Prostate gland (tissue), 2 donors: ENCODE measurements at regions of chr10 and their contacts with region 1.

Region 1: DNA sequence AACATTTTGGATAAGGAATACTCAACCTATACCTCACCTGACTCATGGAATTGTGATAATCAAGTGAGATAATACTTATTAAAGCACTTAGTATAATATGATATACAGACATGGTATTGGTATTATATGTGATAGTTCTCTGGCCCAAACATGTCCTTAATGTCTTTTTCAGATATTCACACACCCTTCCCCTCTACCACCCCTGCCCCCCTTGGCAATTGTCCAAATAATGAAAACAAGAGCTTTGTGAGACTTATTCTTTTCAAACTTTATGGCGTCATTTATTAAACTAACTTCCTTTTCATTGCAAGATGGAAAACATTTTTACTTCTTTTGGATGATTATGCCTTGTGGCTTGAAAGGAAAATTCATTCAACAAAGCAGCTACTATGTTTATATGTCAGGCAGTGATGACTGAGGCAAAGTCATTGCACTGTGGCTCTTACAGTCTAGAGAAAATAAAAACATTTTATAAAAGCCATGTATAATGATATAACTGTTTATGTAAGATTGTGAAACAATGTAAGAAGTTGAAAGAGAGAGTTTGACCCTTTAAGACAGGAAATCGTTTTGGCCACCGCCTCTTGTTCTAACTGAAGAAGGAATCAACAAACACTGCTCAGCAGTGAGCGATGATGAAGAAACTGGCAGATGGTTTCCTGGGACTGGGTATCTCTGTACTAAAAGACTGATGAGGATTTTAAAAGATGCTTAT is 27.4 kb downstream of the MINPP1 start:
- DNase-seq: no peak
- H3K4me3 ChIP-seq: no peak overlapping the region
- H3K27ac ChIP-seq: peak overlapping the region; percentile 23 to 27
- H3K4me1 ChIP-seq: no peaks in the 10 kb centered on the region
- H3K27me3 ChIP-seq: no peaks in the 10 kb centered on the region
- CTCF ChIP-seq: no peak
- POLR2A ChIP-seq: no peak

Region 2: DNA sequence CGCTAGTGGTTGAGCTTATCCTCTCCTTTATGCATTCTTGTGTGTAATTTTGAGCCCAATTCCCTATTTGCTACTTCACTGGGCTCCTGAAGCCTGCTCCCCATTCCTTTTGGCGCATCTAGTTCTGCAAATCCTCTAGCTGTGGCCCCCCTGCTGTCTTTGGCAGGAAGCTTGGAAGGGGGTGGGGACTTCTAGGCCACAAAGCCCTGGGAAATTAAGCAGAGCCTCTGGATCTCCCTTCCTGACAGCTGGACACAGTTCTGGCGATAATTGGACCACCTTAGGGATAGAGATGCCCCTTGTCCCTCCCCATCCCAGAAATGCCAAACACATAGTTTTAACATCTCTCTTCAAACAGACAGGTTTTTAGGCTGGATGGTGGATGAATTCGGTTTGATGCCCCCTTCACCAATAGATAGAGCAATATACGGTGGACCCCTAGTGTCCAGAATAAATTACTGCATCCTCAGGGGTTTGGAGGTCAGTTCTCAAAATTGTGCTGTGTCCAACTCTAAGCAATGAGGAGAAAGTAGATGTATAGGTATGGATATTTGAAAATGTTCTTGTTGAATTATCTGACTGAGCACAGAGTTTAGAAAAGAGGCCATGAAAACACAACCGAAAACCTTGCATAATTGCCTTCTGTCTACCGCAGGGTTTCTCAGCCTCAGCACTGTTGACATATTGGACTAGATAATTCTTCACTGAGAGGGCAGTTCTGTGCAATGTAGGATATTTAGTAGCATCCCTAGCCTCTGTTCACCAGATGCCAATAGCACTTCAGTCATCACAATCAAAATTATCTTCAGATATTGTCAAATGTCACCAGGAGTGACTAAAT is 203.1 kb after region 1 on chr10:
- intact Hi-C with region 1: loop called (anchors 5 kb)
- DNase-seq: no peak
- H3K4me3 ChIP-seq: no peak overlapping the region
- H3K27ac ChIP-seq: no peak overlapping the region
- H3K4me1 ChIP-seq: no peaks in the 10 kb centered on the region
- H3K27me3 ChIP-seq: no peaks in the 10 kb centered on the region
- CTCF ChIP-seq: peak; percentile 53 to 76 (median 70)
- POLR2A ChIP-seq: no peak